ENCODE measurements at regions of chr15 and their contacts with region 1.

Region 1: GRCh38 chr15:51796845-51797401 is 32.5 kb upstream of the TMOD3 start:
- DNase-seq: no peak
- H3K4me3 Mint-ChIP-seq: no peak overlapping the region
- H3K27ac Mint-ChIP-seq: no peak overlapping the region
- H3K4me1 Mint-ChIP-seq: no peaks in the 10 kb centered on the region
- H3K27me3 Mint-ChIP-seq: no peaks in the 10 kb centered on the region
- CTCF ChIP-seq: no peak

Region 2: GRCh38 chr15:51750792-51751685 is 45.9 kb before region 1 on chr15 and contains the start of gene TMOD2:
- CTCF ChIA-PET with region 1: no interaction called
- intact Hi-C with region 1: no loop called
- DNase-seq: peak; percentile 56
- H3K4me3 Mint-ChIP-seq: peak within 1 kb of the TSS; percentile 63
- H3K27ac Mint-ChIP-seq: no peak within 1 kb of the TSS
- H3K4me1 Mint-ChIP-seq: peaks cover 8% of the 10 kb centered on the region
- H3K27me3 Mint-ChIP-seq: peaks cover 87% of the 10 kb centered on the region
- CTCF ChIP-seq: no peak
- total RNA-seq, gene TMOD2: 0.64 and 1.0 TPM in 2 replicates

Region 3: GRCh38 chr15:51888593-51889195 is 91.8 kb after region 1 on chr15:
- CTCF ChIA-PET with region 1: no interaction called
- intact Hi-C with region 1: loop called (anchors 5 kb)
- DNase-seq: no peak
- H3K4me3 Mint-ChIP-seq: no peak overlapping the region
- H3K27ac Mint-ChIP-seq: no peak overlapping the region
- H3K4me1 Mint-ChIP-seq: no peaks in the 10 kb centered on the region
- H3K27me3 Mint-ChIP-seq: no peaks in the 10 kb centered on the region
- CTCF ChIP-seq: peak; percentile 36

Measured in Calu3 (cell line).